ENCODE measurements at regions of chr7 and their contacts with region 1.

Region 1: GRCh38 chr7:131753620-131754222 is 197.3 kb upstream of the PODXL start:
- DNase-seq: peak; percentile 51
- ATAC-seq: peak; percentile 74
- H3K4me3 ChIP-seq: no peak overlapping the region
- H3K27ac ChIP-seq: no peak overlapping the region
- H3K4me1 ChIP-seq: no peaks in the 10 kb centered on the region
- H3K27me3 ChIP-seq: peaks cover 50% of the 10 kb centered on the region
- CTCF ChIP-seq: peak; percentile 72

Region 2: DNA sequence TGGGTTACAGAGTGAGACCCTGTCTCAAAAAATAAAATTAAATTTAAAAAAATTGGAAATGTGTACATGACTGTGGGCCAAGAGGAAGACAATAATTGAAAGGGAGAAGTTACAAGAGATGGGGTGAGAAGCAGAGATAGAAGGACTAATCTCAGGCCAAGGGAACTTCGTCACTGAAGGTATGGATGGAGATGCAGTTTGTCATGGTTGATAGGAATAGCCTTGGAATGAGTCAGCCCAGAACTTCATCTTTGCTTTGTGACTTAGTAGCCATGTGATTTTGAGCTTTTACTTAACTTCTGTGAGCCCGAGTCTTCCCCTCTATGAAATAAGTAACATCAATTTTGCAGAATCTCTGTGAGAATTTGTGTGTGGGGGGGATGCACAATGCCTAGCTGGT is 190.8 kb before region 1 on chr7:
- CTCF ChIA-PET with region 1: no interaction called
- POLR2A ChIA-PET with region 1: no interaction called
- intact Hi-C with region 1: no loop called
- DNase-seq: no peak
- ATAC-seq: no peak
- H3K4me3 ChIP-seq: no peak overlapping the region
- H3K27ac ChIP-seq: no peak overlapping the region
- H3K4me1 ChIP-seq: 0 out of 2 replicates have a peak, but pooled peaks cover 1% of the 10 kb centered on the region
- H3K27me3 ChIP-seq: no peaks in the 10 kb centered on the region
- CTCF ChIP-seq: no peak

Region 3: GRCh38 chr7:131720703-131721102 is 33.0 kb before region 1 on chr7:
- CTCF ChIA-PET with region 1: no interaction called
- POLR2A ChIA-PET with region 1: no interaction called
- intact Hi-C with region 1: no loop called
- DNase-seq: no peak
- ATAC-seq: no peak
- H3K4me3 ChIP-seq: no peak overlapping the region
- H3K27ac ChIP-seq: no peak overlapping the region
- H3K4me1 ChIP-seq: no peaks in the 10 kb centered on the region
- H3K27me3 ChIP-seq: no peaks in the 10 kb centered on the region
- CTCF ChIP-seq: no peak

Region 4: GRCh38 chr7:132044247-132044646 is 290.5 kb after region 1 on chr7:
- CTCF ChIA-PET with region 1: interaction called, 10 read pairs
- POLR2A ChIA-PET with region 1: no interaction called
- intact Hi-C with region 1: no loop called
- DNase-seq: no peak
- ATAC-seq: no peak
- H3K4me3 ChIP-seq: no peak overlapping the region
- H3K27ac ChIP-seq: no peak overlapping the region
- H3K4me1 ChIP-seq: no peaks in the 10 kb centered on the region
- H3K27me3 ChIP-seq: no peaks in the 10 kb centered on the region; the same call in 1 of the 2 replicates
- CTCF ChIP-seq: no peak

Measured in PC-3 (cell line).